Uterus (tissue), 4 donors: ENCODE measurements at regions of chr11 and their contacts with region 1.

Region 1: DNA sequence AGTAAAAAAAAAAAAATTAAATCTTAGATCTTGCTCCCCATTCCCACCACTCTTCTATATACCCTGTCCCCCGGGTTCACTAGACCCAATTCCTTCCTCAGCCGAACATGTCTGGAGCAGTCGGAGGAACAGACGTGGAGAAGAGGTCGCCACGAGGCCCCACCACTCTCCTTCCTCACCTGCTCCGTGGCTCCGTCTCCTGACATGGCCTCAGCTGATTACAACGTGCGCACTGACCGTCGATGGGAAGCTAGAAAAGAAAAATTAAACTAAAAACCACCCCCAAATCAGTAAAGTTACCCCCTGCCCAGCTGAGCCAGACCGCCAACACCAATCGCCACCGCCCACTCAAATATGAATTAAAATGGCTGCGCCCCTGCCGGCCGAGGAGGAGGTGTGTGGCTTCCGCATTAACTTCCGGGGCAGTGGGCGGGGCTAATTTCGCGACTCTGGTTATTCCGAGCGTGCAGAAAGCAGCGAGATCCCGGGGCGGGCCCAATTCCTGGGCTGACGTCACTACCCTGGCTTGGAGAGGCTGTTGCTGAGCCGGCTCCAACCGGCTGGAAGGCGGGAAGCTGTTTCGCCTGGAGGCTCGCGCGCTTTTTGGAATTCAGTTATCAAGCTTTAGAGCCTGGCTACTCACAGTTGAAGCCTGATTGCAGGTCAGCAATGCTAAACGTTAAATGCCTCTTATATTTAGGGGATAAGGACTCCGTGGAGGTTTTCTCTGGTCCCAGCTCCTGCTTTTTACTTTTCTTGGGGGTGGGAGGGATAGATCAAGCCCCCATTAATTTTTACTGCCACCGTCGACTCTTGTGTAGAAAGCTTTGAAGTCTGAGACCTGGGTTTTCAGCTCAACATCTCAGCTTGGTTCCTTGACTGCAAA is at the start of gene CSTF3:
- DNase-seq: peak; percentile 100
- H3K4me3 ChIP-seq: peak within 1 kb of the TSS; percentile 52 to 79
- H3K27ac ChIP-seq: peak within 1 kb of the TSS; percentile 76 to 91
- H3K4me1 ChIP-seq: no peaks in the 10 kb centered on the region
- H3K27me3 ChIP-seq: no peaks in the 10 kb centered on the region
- CTCF ChIP-seq: peak; percentile 35 to 67 (median 53)
- POLR2A ChIP-seq: peak; percentile 61 to 70
- total RNA-seq, gene CSTF3: 7.9 to 53.0 (median 19.0) TPM

Region 2: GRCh38 chr11:33045551-33046255 is 115.7 kb before region 1 on chr11:
- intact Hi-C with region 1: no loop called
- DNase-seq: no peak
- H3K4me3 ChIP-seq: no peak overlapping the region
- H3K27ac ChIP-seq: no peak overlapping the region
- H3K4me1 ChIP-seq: no peaks in the 10 kb centered on the region
- H3K27me3 ChIP-seq: no peaks in the 10 kb centered on the region
- CTCF ChIP-seq: no peak
- POLR2A ChIP-seq: no peak

Region 3: GRCh38 chr11:33266393-33267215 is 105.2 kb after region 1 on chr11:
- intact Hi-C with region 1: no loop called
- DNase-seq: peak in 1 of 2 donors; percentile 35
- H3K4me3 ChIP-seq: no peak overlapping the region
- H3K27ac ChIP-seq: peak overlapping the region; percentile 15 to 19
- H3K4me1 ChIP-seq: peaks cover 0 to 28% of the 10 kb centered on the region in 2 donors
- H3K27me3 ChIP-seq: no peaks in the 10 kb centered on the region
- CTCF ChIP-seq: no peak
- POLR2A ChIP-seq: no peak

Region 4: GRCh38 chr11:33329705-33330329 is 168.5 kb after region 1 on chr11:
- intact Hi-C with region 1: loop called (anchors 10 kb)
- DNase-seq: peak in 1 of 2 donors; percentile 27
- H3K4me3 ChIP-seq: no peak overlapping the region
- H3K27ac ChIP-seq: no peak overlapping the region
- H3K4me1 ChIP-seq: no peaks in the 10 kb centered on the region
- H3K27me3 ChIP-seq: no peaks in the 10 kb centered on the region
- CTCF ChIP-seq: peak; percentile 49 to 66 (median 52)
- POLR2A ChIP-seq: no peak

Region 5: GRCh38 chr11:33687733-33688479 is 526.5 kb after region 1 on chr11:
- intact Hi-C with region 1: loop called (anchors 10 kb)
- DNase-seq: peak in 1 of 2 donors; percentile 56
- H3K4me3 ChIP-seq: no peak overlapping the region
- H3K27ac ChIP-seq: no peak overlapping the region
- H3K4me1 ChIP-seq: peaks cover 0 to 10% of the 10 kb centered on the region in 2 donors
- H3K27me3 ChIP-seq: no peaks in the 10 kb centered on the region
- CTCF ChIP-seq: peak; percentile 52 to 68 (median 61)
- POLR2A ChIP-seq: no peak